Breast epithelium (tissue), 4 donors: ENCODE measurements at regions of chr16 and their contacts with region 1.

Region 1: GRCh38 chr16:54921206-54921824 is 9.3 kb upstream of the IRX5 start:
- DNase-seq: no peak
- H3K4me3 ChIP-seq: no peak overlapping the region
- H3K27ac ChIP-seq: peak overlapping the region; percentile 57 to 63
- H3K4me1 ChIP-seq: peaks cover 0 to 4% of the 10 kb centered on the region in 2 donors
- H3K27me3 ChIP-seq: no peaks in the 10 kb centered on the region
- CTCF ChIP-seq: no peak
- POLR2A ChIP-seq: no peak

Region 2: GRCh38 chr16:54957403-54958171 is 36.3 kb after region 1 on chr16:
- intact Hi-C with region 1: loop called (anchors 2 kb)
- DNase-seq: no peak
- H3K4me3 ChIP-seq: no peak overlapping the region
- H3K27ac ChIP-seq: no peak overlapping the region
- H3K4me1 ChIP-seq: no peaks in the 10 kb centered on the region
- H3K27me3 ChIP-seq: no peaks in the 10 kb centered on the region
- CTCF ChIP-seq: peak in 2 of 3 donors; percentile 27 to 37
- POLR2A ChIP-seq: no peak